ENCODE measurements at regions of chr19 and their contacts with region 1.

Region 1: GRCh38 chr19:58466760-58467589 is at the start of gene ZNF324:
- DNase-seq: peak; percentile 94 to 98 (median 97)
- ATAC-seq: peak; percentile 93
- H3K4me3 ChIP-seq: peak within 1 kb of the TSS; percentile 68
- H3K4me3 Mint-ChIP-seq: peak within 1 kb of the TSS; percentile 93
- H3K27ac ChIP-seq: peak within 1 kb of the TSS; percentile 62 to 81
- H3K27ac Mint-ChIP-seq: peak within 1 kb of the TSS; percentile 83
- H3K4me1 ChIP-seq: peaks cover 20% of the 10 kb centered on the region
- H3K4me1 Mint-ChIP-seq: peaks cover 22% of the 10 kb centered on the region
- H3K27me3 ChIP-seq: no peaks in the 10 kb centered on the region
- H3K27me3 Mint-ChIP-seq: no peaks in the 10 kb centered on the region
- CTCF ChIP-seq: no peak
- total RNA-seq, gene ZNF324: 24.3 to 25.2 TPM

Region 2: DNA sequence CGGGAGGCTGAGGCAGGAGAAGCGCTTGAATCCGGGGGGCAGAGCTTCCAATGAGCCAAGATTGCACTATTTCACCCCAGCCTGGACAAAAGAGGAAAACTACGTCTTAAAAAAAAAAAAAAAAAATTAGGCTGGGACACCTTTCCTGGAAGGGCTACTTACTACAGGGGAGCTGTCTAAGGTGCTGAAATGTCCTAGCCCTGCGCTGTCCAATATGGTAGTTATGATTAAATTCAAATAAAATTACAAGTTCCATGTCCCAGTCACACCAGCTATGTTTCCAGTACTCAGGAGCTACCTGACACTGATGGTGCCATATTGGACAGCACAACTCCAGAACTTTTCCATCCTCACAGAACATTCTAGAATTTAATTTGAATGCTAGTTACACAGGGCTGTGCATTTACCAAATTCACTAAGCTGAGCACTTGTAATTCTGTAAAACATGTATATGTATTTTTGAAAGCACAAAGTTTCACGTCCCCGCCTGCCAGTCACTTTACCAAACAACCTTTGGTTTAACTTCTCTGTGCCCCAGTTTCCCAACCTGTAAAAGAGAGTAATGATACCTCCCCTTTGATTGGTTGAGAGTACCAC is 149.4 kb before region 1 on chr19:
- CTCF ChIA-PET with region 1: no interaction called
- POLR2A ChIA-PET with region 1: no interaction called
- intact Hi-C with region 1: no loop called
- DNase-seq: peak in 3 of 14 experiments; percentile 16 to 57 (median 55)
- ATAC-seq: no peak
- H3K4me3 ChIP-seq: no peak overlapping the region
- H3K4me3 Mint-ChIP-seq: no peak overlapping the region
- H3K27ac ChIP-seq: no peak overlapping the region
- H3K27ac Mint-ChIP-seq: no peak overlapping the region
- H3K4me1 ChIP-seq: no peaks in the 10 kb centered on the region
- H3K4me1 Mint-ChIP-seq: no peaks in the 10 kb centered on the region
- H3K27me3 ChIP-seq: no peaks in the 10 kb centered on the region
- H3K27me3 Mint-ChIP-seq: no peaks in the 10 kb centered on the region
- CTCF ChIP-seq: no peak

Region 3: GRCh38 chr19:58386576-58387337 is 80.2 kb before region 1 on chr19 and contains the start of gene RPS5:
- CTCF ChIA-PET with region 1: no interaction called
- POLR2A ChIA-PET with region 1: no interaction called
- intact Hi-C with region 1: loop called in 1 of 2 experiments (anchors 5 kb)
- DNase-seq: peak; percentile 90 to 100 (median 95)
- ATAC-seq: peak; percentile 90
- H3K4me3 ChIP-seq: peak within 1 kb of the TSS; percentile 79
- H3K4me3 Mint-ChIP-seq: peak within 1 kb of the TSS; percentile 99
- H3K27ac ChIP-seq: peak within 1 kb of the TSS; percentile 93 to 97
- H3K27ac Mint-ChIP-seq: peak within 1 kb of the TSS; percentile 98
- H3K4me1 ChIP-seq: peaks cover 53% of the 10 kb centered on the region
- H3K4me1 Mint-ChIP-seq: peaks cover 47% of the 10 kb centered on the region
- H3K27me3 ChIP-seq: no peaks in the 10 kb centered on the region
- H3K27me3 Mint-ChIP-seq: no peaks in the 10 kb centered on the region
- CTCF ChIP-seq: no peak
- total RNA-seq, gene RPS5: 1,619 to 1,646 TPM

Region 4: DNA sequence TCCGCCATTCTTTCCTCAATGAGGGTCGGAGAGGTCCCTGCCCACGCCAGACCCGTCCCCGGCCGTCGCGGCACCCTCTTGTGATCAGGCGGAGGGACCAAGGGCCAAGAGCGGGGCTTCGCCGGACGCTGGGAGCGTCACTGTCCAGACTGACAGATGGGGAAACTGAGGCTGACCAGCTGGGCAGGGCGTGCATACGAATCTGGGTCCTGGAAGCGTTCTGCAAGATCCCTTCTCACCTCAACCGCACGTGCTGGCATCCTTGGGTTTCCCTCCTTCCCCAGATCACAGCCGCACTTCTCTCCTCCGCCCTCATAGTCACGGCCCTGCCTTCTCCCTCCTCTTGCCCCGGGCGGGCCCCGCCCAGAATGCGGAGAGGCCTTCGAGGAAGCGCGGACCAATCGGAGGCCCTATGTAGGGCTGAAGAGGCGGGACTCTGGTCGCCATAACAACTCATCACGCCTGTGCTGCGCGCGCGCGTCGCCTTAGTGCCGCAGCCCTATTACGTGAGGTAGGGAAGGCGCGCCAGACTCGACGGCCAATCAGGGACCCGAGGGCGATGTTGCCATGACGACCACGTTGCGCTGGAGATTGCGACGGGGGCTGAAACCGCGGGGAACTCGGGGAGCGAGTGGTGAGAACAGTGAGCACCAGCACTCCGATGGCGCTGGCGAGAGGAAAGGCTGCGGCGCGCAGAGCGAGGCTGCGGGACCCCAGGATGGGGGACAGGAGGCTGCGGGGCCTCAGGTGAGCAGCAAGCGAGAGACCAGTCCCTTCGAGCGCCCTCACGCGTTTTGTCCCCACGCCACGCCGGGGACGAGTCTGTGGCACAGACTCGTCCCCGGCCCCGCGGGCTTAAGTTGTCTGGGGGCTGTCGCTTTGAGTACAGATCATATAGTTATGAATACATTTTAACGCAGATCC is 65.8 kb before region 1 on chr19:
- CTCF ChIA-PET with region 1: no interaction called
- POLR2A ChIA-PET with region 1: no interaction called
- intact Hi-C with region 1: loop called in 1 of 2 experiments (anchors 1 kb)
- DNase-seq: peak; percentile 98 to 100 (median 99)
- ATAC-seq: peak; percentile 95
- H3K4me3 ChIP-seq: peak overlapping the region; percentile 75
- H3K4me3 Mint-ChIP-seq: peak overlapping the region; percentile 88
- H3K27ac ChIP-seq: peak overlapping the region; percentile 59 to 94
- H3K27ac Mint-ChIP-seq: peak overlapping the region; percentile 86
- H3K4me1 ChIP-seq: peaks cover 20% of the 10 kb centered on the region
- H3K4me1 Mint-ChIP-seq: peaks cover 9% of the 10 kb centered on the region
- H3K27me3 ChIP-seq: peaks cover 11 to 15% of the 10 kb centered on the region in 2 experiments
- H3K27me3 Mint-ChIP-seq: peaks cover 25% of the 10 kb centered on the region
- CTCF ChIP-seq: no peak

Region 5: DNA sequence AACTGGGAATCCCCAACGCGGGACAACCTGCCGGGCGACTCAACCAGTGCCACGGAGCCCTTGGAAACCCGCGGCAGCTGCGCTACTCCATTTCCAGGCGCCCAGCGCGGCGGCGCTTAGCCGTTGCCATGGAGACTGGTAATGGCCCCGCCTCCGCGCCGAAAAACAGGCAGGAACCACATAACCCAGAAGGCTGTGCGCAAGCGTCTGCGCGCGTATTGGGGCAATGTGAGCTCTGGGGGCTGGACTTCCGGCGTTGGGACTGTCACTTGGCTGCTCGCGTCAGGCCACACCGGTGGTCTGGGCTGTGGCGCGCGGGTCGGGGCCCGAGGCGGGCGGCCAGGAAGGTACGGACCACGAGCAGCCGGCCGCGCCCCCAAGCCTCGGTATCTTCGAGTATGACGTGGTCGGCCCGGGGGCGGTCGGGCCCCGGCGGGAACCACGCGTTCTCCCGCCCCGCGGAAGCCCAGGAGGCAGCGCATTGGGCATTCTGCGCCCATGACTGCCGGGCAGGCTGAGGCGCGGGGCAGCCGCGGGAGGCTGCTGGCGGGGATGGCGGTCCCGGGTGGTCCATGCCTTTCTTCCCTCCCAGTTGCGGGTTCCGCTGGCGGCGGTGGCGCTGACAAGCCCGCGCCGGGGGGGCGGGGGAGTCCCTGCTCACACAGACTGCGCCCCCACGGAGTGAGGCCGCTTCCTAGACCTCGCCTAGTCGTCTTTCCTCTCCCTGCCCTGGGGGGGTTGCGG is 15.4 kb before region 1 on chr19 and contains the start of gene ZNF324B:
- CTCF ChIA-PET with region 1: no interaction called
- POLR2A ChIA-PET with region 1: interaction called, 3 read pairs
- intact Hi-C with region 1: loop called in 1 of 2 experiments (anchors 1 kb)
- DNase-seq: peak; percentile 92 to 98 (median 96)
- ATAC-seq: peak; percentile 97
- H3K4me3 ChIP-seq: peak within 1 kb of the TSS; percentile 66
- H3K4me3 Mint-ChIP-seq: peak within 1 kb of the TSS; percentile 85
- H3K27ac ChIP-seq: peak within 1 kb of the TSS in 1 of 2 donors; percentile 61
- H3K27ac Mint-ChIP-seq: peak within 1 kb of the TSS; percentile 63
- H3K4me1 ChIP-seq: peaks cover 15% of the 10 kb centered on the region
- H3K4me1 Mint-ChIP-seq: peaks cover 21% of the 10 kb centered on the region
- H3K27me3 ChIP-seq: peaks cover 9 to 16% of the 10 kb centered on the region in 2 experiments
- H3K27me3 Mint-ChIP-seq: peaks cover 28% of the 10 kb centered on the region
- CTCF ChIP-seq: no peak
- total RNA-seq, gene ZNF324B: 6.3 to 7.6 TPM